ENCODE measurements at regions of chr15 and their contacts with region 1.

Region 1: GRCh38 chr15:79041601-79042168 is 48.9 kb downstream of the RASGRF1 start:
- DNase-seq: no peak
- H3K4me3 Mint-ChIP-seq: no peak overlapping the region
- H3K27ac Mint-ChIP-seq: no peak overlapping the region
- H3K4me1 Mint-ChIP-seq: no peaks in the 10 kb centered on the region
- H3K27me3 Mint-ChIP-seq: peaks cover 6% of the 10 kb centered on the region
- CTCF ChIP-seq: no peak

Region 2: DNA sequence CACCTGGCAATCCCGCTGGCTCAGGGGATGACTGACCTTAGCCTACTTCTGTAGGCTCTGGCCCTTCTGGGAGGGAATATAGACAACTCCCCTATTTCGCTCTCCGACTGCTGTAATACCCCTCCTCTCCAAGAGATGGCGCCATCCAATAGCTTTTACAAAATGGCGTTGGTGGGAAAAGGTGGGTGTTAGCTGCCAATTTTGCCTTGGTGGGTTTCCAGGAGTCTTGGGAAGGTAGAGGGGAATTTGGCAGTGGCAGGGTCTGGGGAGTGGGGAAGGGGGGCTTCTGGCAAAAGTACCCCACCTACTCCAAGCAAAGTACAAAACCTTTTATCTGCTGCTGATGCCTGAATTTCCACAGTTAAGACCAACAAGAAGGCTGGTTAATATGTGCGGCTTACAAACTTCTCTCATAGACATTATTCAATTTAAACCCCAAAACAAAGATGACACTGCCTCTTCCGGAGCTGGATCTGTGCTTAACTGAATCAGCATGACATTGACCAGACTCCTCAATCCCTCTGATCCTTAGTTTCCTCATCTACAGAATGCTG is 13.2 kb before region 1 on chr15:
- CTCF ChIA-PET with region 1: interaction called, 28 read pairs
- POLR2A ChIA-PET with region 1: no interaction called
- intact Hi-C with region 1: no loop called
- DNase-seq: peak; percentile 70
- H3K4me3 Mint-ChIP-seq: no peak overlapping the region
- H3K27ac Mint-ChIP-seq: no peak overlapping the region
- H3K4me1 Mint-ChIP-seq: no peaks in the 10 kb centered on the region
- H3K27me3 Mint-ChIP-seq: no peaks in the 10 kb centered on the region
- CTCF ChIP-seq: peak; percentile 81

Region 3: DNA sequence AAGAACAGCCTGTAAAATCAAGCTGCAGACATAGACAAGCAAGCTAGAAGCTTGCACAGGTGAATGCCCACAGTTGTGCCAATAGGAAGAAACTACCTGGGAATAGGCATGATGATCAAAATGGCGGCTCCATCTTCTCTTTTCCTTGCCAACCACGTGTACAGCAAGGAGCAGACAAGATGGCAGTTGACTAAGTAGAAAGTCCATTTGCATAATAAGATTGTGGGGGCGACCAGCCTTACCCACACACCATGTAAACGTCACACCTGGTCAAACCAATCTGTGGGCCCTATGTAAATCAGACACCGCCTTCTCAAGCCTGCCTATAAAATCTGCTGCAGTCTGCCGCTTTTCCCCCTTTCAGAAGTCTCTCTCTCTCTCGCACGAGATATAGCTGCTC is 215.8 kb after region 1 on chr15:
- CTCF ChIA-PET with region 1: no interaction called
- POLR2A ChIA-PET with region 1: no interaction called
- intact Hi-C with region 1: no loop called
- DNase-seq: no peak
- H3K4me3 Mint-ChIP-seq: no peak overlapping the region
- H3K27ac Mint-ChIP-seq: no peak overlapping the region
- H3K4me1 Mint-ChIP-seq: no peaks in the 10 kb centered on the region
- H3K27me3 Mint-ChIP-seq: peaks cover 52% of the 10 kb centered on the region
- CTCF ChIP-seq: no peak

Measured in MCF 10A (cell line).